ENCODE measurements at regions of chr3 and their contacts with region 1.

Region 1: GRCh38 chr3:179147873-179148615 is at the start of gene PIK3CA:
- DNase-seq: peak; percentile 93
- H3K4me3 ChIP-seq: peak within 1 kb of the TSS; percentile 92
- H3K27me3 ChIP-seq: no peaks in the 10 kb centered on the region
- CTCF ChIP-seq: no peak
- polyA plus RNA-seq, gene PIK3CA: 5.5 and 13.2 TPM in 2 replicates

Region 2: GRCh38 chr3:179309225-179310078 is 161.4 kb after region 1 on chr3:
- CTCF ChIA-PET with region 1: interaction called, 13 read pairs
- POLR2A ChIA-PET with region 1: no interaction called
- DNase-seq: no peak
- H3K4me3 ChIP-seq: no peak overlapping the region
- H3K27me3 ChIP-seq: no peaks in the 10 kb centered on the region
- CTCF ChIP-seq: no peak